ENCODE measurements at regions of chr4 and their contacts with region 1.

Region 1: DNA sequence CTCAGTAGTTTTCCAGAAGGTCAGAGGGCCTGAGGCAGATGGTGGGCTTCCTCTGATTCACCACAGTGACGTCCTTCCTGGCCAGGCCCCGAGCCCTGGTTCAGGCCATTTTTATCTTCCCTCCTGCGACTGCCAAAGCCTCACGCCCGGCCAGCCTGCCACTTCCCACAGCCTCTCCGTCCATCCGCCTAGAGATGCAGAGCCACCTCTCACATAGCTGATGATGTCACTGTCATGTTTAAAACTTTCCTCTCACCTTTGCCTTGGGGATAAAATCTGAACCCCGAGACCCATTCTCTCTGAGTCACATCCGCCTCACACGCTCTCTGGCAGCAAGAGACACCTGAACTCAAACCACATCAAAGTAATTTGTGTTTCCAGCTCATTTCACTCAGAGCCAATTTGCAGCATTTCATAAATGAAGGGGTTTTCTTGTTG is 175.3 kb downstream of the QDPR start:
- DNase-seq: peak; percentile 88
- H3K4me3 Mint-ChIP-seq: peak overlapping the region; percentile 22
- H3K27ac Mint-ChIP-seq: peak overlapping the region; percentile 87
- H3K4me1 Mint-ChIP-seq: peaks cover 50% of the 10 kb centered on the region
- H3K27me3 Mint-ChIP-seq: no peaks in the 10 kb centered on the region

Region 2: DNA sequence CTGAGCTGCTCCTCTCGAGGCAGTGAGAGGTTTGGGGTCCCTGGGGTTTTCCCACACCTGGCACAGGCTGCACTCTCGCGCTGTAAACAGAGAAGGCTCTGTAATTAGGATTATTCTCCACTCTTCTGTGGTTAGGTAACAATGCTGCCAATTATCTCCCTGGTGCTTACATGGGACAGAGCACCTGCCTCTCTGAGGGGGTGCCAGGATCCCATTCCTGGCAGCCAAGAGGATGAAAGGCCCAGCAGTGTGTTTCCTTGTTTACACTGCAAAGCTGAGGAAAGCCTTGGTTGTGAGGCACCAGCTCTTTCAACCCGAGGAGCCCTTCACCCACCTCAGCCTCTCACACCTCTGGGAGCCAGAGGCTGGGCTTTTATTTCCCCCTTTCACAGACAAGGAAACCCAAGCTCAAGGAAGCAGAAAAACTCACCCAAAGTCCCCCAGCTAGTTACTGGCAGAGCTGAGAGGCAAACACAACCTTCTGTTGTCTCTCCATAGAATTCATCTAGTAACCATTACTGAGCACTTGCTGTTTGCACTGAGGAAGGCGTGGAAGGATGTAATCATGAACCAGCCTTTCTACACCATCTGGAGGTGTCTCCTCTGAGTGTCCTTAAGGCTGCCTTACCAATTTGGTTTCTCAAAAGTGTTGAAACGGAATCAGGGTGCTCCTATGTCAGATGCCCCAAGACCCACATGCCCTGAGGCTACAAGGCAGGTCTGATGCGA is 1213.0 kb before region 1 on chr4:
- CTCF ChIA-PET with region 1: no interaction called
- intact Hi-C with region 1: loop called (anchors 2 kb)
- DNase-seq: no peak
- H3K4me3 Mint-ChIP-seq: no peak overlapping the region
- H3K27ac Mint-ChIP-seq: peak overlapping the region; percentile 85
- H3K4me1 Mint-ChIP-seq: peaks cover 25% of the 10 kb centered on the region
- H3K27me3 Mint-ChIP-seq: no peaks in the 10 kb centered on the region

Region 3: DNA sequence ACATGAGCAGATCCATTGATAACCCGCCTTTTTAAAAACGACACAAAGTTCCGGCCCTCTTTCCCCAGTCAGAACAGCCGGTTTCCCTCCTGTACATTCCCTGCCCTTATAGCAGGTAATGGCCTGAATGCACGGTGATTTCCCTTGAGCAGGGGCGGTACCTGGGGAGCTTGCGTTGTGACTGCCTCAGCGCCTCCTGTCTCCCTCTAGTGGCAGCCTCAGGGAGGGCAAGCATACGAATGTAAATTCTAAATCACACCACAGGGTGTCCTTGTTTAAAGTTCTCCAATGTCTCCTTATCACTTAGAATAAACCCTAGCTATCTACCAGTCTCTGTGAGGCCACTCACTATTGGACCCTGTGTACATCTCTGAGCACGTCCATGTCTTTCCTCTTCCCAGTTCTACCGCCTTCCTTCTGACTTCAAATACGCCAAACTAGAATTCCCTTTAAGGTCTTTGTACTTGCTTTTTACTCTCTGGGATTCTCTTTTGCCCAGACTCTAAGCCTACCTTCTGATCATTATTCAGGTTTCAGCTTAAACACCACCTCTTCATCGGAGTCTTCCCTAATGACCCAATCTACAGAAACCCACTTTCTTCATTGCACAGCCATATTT is 419.7 kb before region 1 on chr4:
- CTCF ChIA-PET with region 1: no interaction called
- intact Hi-C with region 1: loop called (anchors 5 kb)
- DNase-seq: peak; percentile 90
- H3K4me3 Mint-ChIP-seq: no peak overlapping the region
- H3K27ac Mint-ChIP-seq: no peak overlapping the region
- H3K4me1 Mint-ChIP-seq: no peaks in the 10 kb centered on the region
- H3K27me3 Mint-ChIP-seq: no peaks in the 10 kb centered on the region

Region 4: GRCh38 chr4:17511950-17512795 is 175.6 kb after region 1 on chr4 and contains the start of gene QDPR:
- CTCF ChIA-PET with region 1: no interaction called
- intact Hi-C with region 1: loop called (anchors 5 kb)
- DNase-seq: peak; percentile 76
- H3K4me3 Mint-ChIP-seq: peak within 1 kb of the TSS; percentile 89
- H3K27ac Mint-ChIP-seq: peak within 1 kb of the TSS; percentile 63
- H3K4me1 Mint-ChIP-seq: peaks cover 21% of the 10 kb centered on the region
- H3K27me3 Mint-ChIP-seq: no peaks in the 10 kb centered on the region
- total RNA-seq, gene QDPR: 42.2 to 43.8 TPM

Region 5: DNA sequence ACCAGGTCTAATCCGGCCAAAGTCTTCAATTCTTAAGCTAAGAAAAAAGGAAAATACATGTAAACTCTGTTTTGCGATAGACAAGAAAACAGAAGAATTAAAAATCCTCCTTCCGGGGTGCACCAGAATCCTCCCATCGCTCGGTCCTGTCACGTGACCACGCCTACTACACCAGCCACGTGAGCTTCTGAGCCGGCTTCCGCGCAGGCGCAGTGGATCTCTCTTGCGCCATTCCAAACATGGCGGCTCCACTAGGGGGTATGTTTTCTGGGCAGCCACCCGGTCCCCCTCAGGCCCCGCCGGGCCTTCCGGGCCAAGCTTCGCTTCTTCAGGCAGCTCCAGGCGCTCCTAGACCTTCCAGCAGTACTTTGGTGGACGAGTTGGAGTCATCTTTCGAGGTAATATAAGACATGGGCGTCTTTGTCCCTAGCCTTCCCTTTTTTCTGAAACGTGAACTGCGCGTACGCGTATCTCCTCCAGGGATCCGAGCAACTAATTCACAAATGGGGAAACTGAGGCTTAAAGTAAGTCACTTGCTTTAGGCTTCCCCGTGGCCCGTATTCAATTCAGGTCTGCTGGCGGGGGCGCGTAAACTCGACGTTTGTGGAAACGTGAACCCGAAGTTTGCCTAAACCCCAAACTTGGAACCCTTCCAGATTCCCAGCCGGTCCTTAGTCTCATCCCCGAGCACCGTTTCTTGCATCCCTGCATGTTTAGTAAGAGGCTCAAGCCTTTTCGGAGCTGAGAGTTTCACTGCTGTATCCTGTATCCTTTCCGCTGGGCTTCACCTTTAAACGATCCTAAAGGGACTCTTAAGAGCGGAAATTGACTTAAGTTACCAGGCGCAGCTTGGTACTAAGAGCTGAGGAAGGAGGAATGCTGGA is 278.1 kb after region 1 on chr4 and contains the start of gene MED28:
- CTCF ChIA-PET with region 1: no interaction called
- intact Hi-C with region 1: loop called (anchors 1 kb)
- DNase-seq: peak; percentile 98
- H3K4me3 Mint-ChIP-seq: peak within 1 kb of the TSS; percentile 98
- H3K27ac Mint-ChIP-seq: peak within 1 kb of the TSS; percentile 85
- H3K4me1 Mint-ChIP-seq: peaks cover 49% of the 10 kb centered on the region
- H3K27me3 Mint-ChIP-seq: no peaks in the 10 kb centered on the region
- total RNA-seq, gene MED28: 52.3 to 59.5 TPM